Right lobe of liver (tissue), 6 donors: ENCODE measurements at regions of chr10 and their contacts with region 1.

Region 1: GRCh38 chr10:69639291-69640195 is 9.5 kb downstream of the FAM241B start:
- DNase-seq: peak in 2 of 3 donors; percentile 45 to 67
- ATAC-seq: peak; percentile 59 to 78 (median 72)
- H3K4me3 ChIP-seq: no peak overlapping the region
- H3K27ac ChIP-seq: no peak overlapping the region
- H3K4me1 ChIP-seq: no peaks in the 10 kb centered on the region
- H3K27me3 ChIP-seq: no peaks in the 10 kb centered on the region
- CTCF ChIP-seq: peak; percentile 73 to 90 (median 88)
- POLR2A ChIP-seq: no peak

Region 2: GRCh38 chr10:69413221-69413865 is 226.2 kb before region 1 on chr10:
- intact Hi-C with region 1: loop called in 1 of 2 experiments (anchors 10 kb)
- DNase-seq: no peak
- ATAC-seq: peak in 3 of 4 donors; percentile 14 to 24 (median 20)
- H3K4me3 ChIP-seq: no peak overlapping the region
- H3K27ac ChIP-seq: no peak overlapping the region
- H3K4me1 ChIP-seq: peaks cover 0 to 5% (median 2%) of the 10 kb centered on the region in 4 donors
- H3K27me3 ChIP-seq: no peaks in the 10 kb centered on the region
- CTCF ChIP-seq: peak; percentile 17 to 49 (median 44)
- POLR2A ChIP-seq: no peak

Region 3: GRCh38 chr10:69515699-69516259 is 123.8 kb before region 1 on chr10:
- intact Hi-C with region 1: loop called (anchors 2 to 5 kb)
- DNase-seq: peak; percentile 77 to 80 (median 77)
- ATAC-seq: peak; percentile 96 to 99 (median 98)
- H3K4me3 ChIP-seq: no peak overlapping the region
- H3K27ac ChIP-seq: no peak overlapping the region
- H3K4me1 ChIP-seq: no peaks in the 10 kb centered on the region
- H3K27me3 ChIP-seq: no peaks in the 10 kb centered on the region
- CTCF ChIP-seq: peak; percentile 84 to 88 (median 86)
- POLR2A ChIP-seq: no peak

Region 4: DNA sequence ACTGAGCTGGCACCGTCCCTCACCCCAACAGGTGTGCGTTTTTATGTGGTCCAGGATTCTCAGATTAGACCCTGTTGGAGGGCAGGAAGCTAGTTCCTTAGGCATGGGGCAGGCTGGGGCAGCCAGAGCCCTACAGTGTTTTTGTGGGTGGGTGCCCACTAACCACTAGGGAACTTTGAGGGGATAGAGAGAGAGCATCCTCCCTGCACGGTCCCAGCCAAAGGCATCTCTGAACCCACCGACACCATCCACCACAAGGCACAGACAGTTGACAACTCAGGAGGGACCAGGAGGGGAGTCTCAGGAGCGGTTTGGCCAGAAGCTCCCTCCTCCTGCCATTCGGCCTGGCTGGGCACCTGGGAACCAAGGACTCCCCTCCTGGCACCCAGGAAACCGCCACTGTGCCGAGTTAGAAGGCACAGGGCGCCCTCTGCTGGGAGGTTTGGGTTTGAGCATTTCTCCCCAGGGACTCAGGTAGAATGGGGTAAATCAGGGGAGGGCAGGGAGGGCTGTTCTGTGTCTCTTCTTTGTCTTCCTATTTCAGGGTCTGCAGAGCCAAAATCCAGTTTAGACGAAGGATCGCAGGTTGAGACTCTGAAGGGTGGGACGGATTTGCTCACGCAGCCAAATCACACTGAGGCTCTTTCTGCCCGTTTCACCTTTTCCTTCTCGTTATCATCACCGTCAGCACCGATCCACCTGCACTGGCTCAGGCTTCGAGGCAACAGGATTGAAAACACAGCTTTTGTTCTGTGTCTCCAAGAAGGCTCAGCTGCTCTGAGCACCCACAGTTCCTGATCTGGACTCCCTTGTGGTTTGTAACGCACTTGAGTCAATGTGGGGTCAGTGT is 77.4 kb after region 1 on chr10:
- intact Hi-C with region 1: loop called in 1 of 2 experiments (anchors 5 kb)
- DNase-seq: peak; percentile 66 to 71 (median 68)
- ATAC-seq: peak; percentile 81 to 94 (median 90)
- H3K4me3 ChIP-seq: no peak overlapping the region
- H3K27ac ChIP-seq: no peak overlapping the region
- H3K4me1 ChIP-seq: no peaks in the 10 kb centered on the region
- H3K27me3 ChIP-seq: no peaks in the 10 kb centered on the region
- CTCF ChIP-seq: peak; percentile 68 to 84 (median 75)
- POLR2A ChIP-seq: no peak

Region 5: GRCh38 chr10:70742537-70743429 is 1103.2 kb after region 1 on chr10:
- intact Hi-C with region 1: no loop called
- DNase-seq: no peak
- ATAC-seq: peak in 3 of 4 donors; percentile 41 to 66 (median 47)
- H3K4me3 ChIP-seq: no peak overlapping the region
- H3K27ac ChIP-seq: no peak overlapping the region
- H3K4me1 ChIP-seq: no peaks in the 10 kb centered on the region
- H3K27me3 ChIP-seq: no peaks in the 10 kb centered on the region
- CTCF ChIP-seq: no peak
- POLR2A ChIP-seq: no peak